Activated naive CD4-positive, alpha-beta T cell treated with anti-CD3 and anti-CD28 coated beads for 36 hours (primary cell): ENCODE measurements at regions of chr19 and their contacts with region 1.

Region 1: GRCh38 chr19:57819475-57820148 is 4.9 kb upstream of the ZNF552 start:
- DNase-seq: peak; percentile 89
- H3K4me3 Mint-ChIP-seq: peak overlapping the region; percentile 99
- H3K27ac Mint-ChIP-seq: peak overlapping the region; percentile 96
- H3K4me1 Mint-ChIP-seq: peaks cover 50% of the 10 kb centered on the region
- H3K27me3 Mint-ChIP-seq: no peaks in the 10 kb centered on the region

Region 2: DNA sequence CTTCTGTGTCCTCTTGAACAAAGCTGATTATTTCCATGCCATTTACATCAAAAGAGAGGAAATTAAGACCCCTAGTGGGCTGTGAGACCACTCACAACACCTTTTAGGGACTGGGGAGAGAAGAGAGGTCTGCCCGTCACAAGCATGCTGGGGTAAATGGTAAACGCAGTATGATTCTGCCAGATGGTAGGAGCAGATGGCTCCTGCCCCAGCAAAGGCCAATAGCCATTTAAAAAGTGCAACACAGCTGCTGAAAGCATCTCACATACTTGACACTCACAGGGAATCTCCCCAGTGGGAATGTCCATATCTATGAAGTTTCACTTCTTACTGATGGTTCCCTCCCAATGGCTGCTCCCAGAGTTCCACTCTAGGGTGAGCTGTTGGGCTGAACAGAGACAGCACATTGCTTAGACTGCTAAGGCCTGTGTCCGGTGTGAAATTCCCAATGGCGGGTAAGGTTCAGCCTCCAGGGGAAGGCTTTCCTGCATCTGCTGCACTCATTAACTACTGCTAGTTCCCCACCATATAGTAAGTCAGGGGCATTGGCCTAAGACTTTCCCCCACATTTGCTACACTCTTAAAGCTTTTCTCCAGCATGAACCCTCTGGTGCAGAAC is 99.6 kb before region 1 on chr19:
- CTCF ChIA-PET with region 1: no interaction called
- intact Hi-C with region 1: loop called (anchors 5 kb)
- DNase-seq: no peak
- H3K4me3 Mint-ChIP-seq: no peak overlapping the region
- H3K27ac Mint-ChIP-seq: no peak overlapping the region
- H3K4me1 Mint-ChIP-seq: peaks cover 2% of the 10 kb centered on the region
- H3K27me3 Mint-ChIP-seq: no peaks in the 10 kb centered on the region

Region 3: GRCh38 chr19:57746580-57747471 is 72.8 kb before region 1 on chr19 and contains the start of gene ZNF776:
- CTCF ChIA-PET with region 1: no interaction called
- intact Hi-C with region 1: loop called (anchors 1 kb)
- DNase-seq: peak; percentile 90
- H3K4me3 Mint-ChIP-seq: peak within 1 kb of the TSS; percentile 99
- H3K27ac Mint-ChIP-seq: peak within 1 kb of the TSS; percentile 90
- H3K4me1 Mint-ChIP-seq: peaks cover 17% of the 10 kb centered on the region
- H3K27me3 Mint-ChIP-seq: no peaks in the 10 kb centered on the region
- total RNA-seq, gene ZNF776: 9.4 to 10.3 TPM

Region 4: DNA sequence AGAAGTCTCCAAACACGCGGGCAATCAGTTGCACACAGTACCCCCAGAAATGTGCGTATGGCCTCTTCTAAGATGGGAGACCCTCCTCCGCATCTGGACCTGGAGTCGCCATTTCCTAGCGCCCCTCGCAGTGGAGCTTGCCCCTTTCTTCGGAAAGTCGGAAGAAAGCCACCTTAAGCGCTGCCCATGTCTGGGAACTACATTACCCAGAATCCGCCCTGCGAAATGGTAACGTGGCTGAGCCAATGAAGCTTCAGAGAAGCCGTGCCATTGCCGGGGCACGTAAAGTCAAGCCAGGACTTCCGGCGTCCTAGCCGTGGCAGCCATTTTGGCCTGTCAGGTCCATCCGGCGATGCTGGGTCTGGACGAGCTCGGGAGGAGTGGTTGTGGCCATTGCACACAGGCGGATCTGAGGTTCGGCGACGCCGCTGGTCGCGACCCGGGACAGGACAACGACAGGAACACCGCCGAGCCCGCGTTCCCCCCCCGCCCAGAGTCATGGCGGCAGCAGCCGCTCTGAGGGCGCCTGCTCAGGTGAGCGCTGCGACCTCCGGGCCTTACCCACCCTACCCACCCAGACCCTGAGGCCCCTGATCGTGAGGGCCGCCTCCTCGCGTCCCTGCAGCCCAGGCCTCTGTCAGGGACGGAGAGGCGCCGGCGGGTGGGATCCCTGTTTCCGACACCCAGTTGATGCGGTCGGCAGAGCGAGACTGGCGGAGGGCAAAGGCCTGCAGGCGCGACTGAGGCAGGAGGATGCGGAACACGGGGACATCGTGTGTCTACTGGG is 50.1 kb before region 1 on chr19 and contains the start of gene ZNF586:
- CTCF ChIA-PET with region 1: no interaction called
- intact Hi-C with region 1: loop called (anchors 1 kb)
- DNase-seq: peak; percentile 93
- H3K4me3 Mint-ChIP-seq: peak within 1 kb of the TSS; percentile 91
- H3K27ac Mint-ChIP-seq: peak within 1 kb of the TSS; percentile 89
- H3K4me1 Mint-ChIP-seq: peaks cover 34% of the 10 kb centered on the region
- H3K27me3 Mint-ChIP-seq: no peaks in the 10 kb centered on the region
- total RNA-seq, gene ZNF586: 14.5 to 14.9 TPM

Region 5: DNA sequence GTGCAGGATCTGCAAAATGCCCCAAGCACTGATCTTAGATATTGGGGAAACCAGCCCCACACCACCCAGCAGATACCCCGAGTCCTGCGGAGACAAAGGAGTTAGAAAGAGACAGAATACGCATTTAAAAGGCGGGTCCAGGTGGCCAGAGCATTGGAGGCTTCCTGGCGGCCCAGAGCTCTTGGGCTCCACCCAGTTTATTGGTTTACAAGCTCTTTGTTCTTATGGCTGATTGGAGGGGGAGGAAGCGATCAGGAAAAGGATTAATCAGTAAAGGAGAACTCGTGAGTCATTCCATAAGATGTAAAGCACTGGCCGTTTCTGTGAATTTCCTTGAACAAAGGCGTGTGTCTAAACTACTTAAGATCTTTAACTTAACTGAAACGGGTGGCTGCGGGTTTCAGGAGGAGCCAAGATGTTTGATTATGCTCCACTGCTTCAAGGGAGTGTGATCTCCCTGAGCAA is 31.0 kb after region 1 on chr19:
- CTCF ChIA-PET with region 1: no interaction called
- intact Hi-C with region 1: loop called (anchors 1 kb)
- DNase-seq: no peak
- H3K4me3 Mint-ChIP-seq: peak overlapping the region; percentile 84
- H3K27ac Mint-ChIP-seq: peak overlapping the region; percentile 77
- H3K4me1 Mint-ChIP-seq: peaks cover 21% of the 10 kb centered on the region
- H3K27me3 Mint-ChIP-seq: no peaks in the 10 kb centered on the region